Activated B cell treated with CpG ODN at 0.5 μM for 24 hours (primary cell): ENCODE measurements at regions of chrX and their contacts with region 1.

Region 1: GRCh38 chrX:150568320-150569154 is at the start of gene MTM1:
- DNase-seq: peak; percentile 86
- ATAC-seq: peak; percentile 86
- H3K4me3 Mint-ChIP-seq: peak within 1 kb of the TSS; percentile 86
- H3K27ac Mint-ChIP-seq: peak within 1 kb of the TSS; percentile 89
- H3K4me1 Mint-ChIP-seq: peaks cover 45% of the 10 kb centered on the region
- H3K27me3 Mint-ChIP-seq: no peaks in the 10 kb centered on the region
- CTCF ChIP-seq: no peak
- total RNA-seq, gene MTM1: 22.0 and 24.4 TPM in 2 replicates

Region 2: DNA sequence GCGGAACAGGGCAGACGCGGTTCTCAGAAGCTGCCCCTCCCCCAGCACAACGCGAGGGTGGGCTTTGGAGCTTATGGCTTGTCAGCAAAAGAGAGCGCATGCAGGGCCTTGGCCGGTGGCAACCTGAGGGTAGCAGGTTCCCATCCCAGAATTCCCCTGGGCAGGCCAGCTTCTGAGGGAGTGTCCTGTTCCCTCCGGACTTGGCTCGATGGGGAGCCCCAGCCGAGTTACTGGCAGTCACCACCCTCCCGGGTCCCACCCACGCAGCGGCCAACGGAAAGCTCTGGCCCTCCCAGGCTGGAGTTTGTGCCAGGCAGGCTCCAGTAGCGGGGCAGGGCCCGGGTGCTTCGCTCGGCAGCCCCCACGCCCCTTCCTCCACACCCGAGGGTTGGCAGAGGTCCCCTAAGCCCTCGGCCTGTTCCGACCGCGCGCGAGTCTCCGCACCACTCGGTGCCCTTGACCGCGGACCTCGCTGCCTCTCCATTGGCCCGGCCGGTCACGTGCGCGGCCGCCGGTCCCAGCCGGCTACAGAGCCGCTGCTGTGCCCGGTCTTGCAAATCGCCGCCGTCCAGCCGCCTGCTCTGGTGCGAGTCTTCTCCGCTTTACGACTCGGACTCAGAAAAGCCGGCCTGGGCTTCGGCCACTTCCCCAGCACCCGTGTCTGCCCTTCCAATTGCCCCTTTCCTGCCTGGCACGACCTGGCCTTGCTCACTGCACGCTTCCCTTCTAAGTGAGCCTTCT is 21.0 kb before region 1 on chrX:
- CTCF ChIA-PET with region 1: no interaction called
- POLR2A ChIA-PET with region 1: interaction called, 28 read pairs
- intact Hi-C with region 1: loop called (anchors 2 kb)
- DNase-seq: peak; percentile 32
- ATAC-seq: peak; percentile 57
- H3K4me3 Mint-ChIP-seq: peak overlapping the region; percentile 77
- H3K27ac Mint-ChIP-seq: peak overlapping the region; percentile 66
- H3K4me1 Mint-ChIP-seq: peaks cover 33% of the 10 kb centered on the region
- H3K27me3 Mint-ChIP-seq: no peaks in the 10 kb centered on the region
- CTCF ChIP-seq: no peak

Region 3: GRCh38 chrX:150898343-150899190 is 330.0 kb after region 1 on chrX and contains the start of gene CD99L2:
- CTCF ChIA-PET with region 1: no interaction called
- POLR2A ChIA-PET with region 1: no interaction called
- intact Hi-C with region 1: loop called (anchors 1 kb)
- DNase-seq: peak; percentile 84
- ATAC-seq: peak; percentile 91
- H3K4me3 Mint-ChIP-seq: peak within 1 kb of the TSS; percentile 90
- H3K27ac Mint-ChIP-seq: peak within 1 kb of the TSS; percentile 69
- H3K4me1 Mint-ChIP-seq: peaks cover 2% of the 10 kb centered on the region
- H3K27me3 Mint-ChIP-seq: peaks cover 6% of the 10 kb centered on the region
- CTCF ChIP-seq: no peak
- total RNA-seq, gene CD99L2: 12.5 and 12.7 TPM in 2 replicates

Region 4: GRCh38 chrX:151239756-151240155 is 671.2 kb after region 1 on chrX:
- CTCF ChIA-PET with region 1: no interaction called
- POLR2A ChIA-PET with region 1: no interaction called
- intact Hi-C with region 1: no loop called
- DNase-seq: no peak
- ATAC-seq: no peak
- H3K4me3 Mint-ChIP-seq: no peak overlapping the region
- H3K27ac Mint-ChIP-seq: no peak overlapping the region
- H3K4me1 Mint-ChIP-seq: no peaks in the 10 kb centered on the region
- H3K27me3 Mint-ChIP-seq: no peaks in the 10 kb centered on the region
- CTCF ChIP-seq: no peak